CD8-positive, alpha-beta T cell (primary cell): ENCODE measurements at regions of chr19 and their contacts with region 1.

Region 1: GRCh38 chr19:7340959-7341837 is 7.5 kb upstream of the ARHGEF18 start:
- DNase-seq: peak; percentile 77 to 96 (median 84)
- ATAC-seq: peak; percentile 27
- H3K4me3 ChIP-seq: no peak overlapping the region
- H3K4me3 Mint-ChIP-seq: no peak overlapping the region
- H3K27ac ChIP-seq: no peak overlapping the region
- H3K27ac Mint-ChIP-seq: peak overlapping the region; percentile 85
- H3K4me1 ChIP-seq: peaks cover 49% of the 10 kb centered on the region
- H3K4me1 Mint-ChIP-seq: peaks cover 52% of the 10 kb centered on the region
- H3K27me3 ChIP-seq: no peaks in the 10 kb centered on the region
- H3K27me3 Mint-ChIP-seq: no peaks in the 10 kb centered on the region
- CTCF ChIP-seq: peak; percentile 93

Region 2: GRCh38 chr19:7137120-7137519 is 204.1 kb before region 1 on chr19:
- CTCF ChIA-PET with region 1: interaction called, 13 read pairs
- POLR2A ChIA-PET with region 1: no interaction called
- intact Hi-C with region 1: no loop called
- DNase-seq: no peak
- ATAC-seq: no peak
- H3K4me3 ChIP-seq: no peak overlapping the region
- H3K4me3 Mint-ChIP-seq: no peak overlapping the region
- H3K27ac ChIP-seq: no peak overlapping the region
- H3K27ac Mint-ChIP-seq: no peak overlapping the region
- H3K4me1 ChIP-seq: no peaks in the 10 kb centered on the region
- H3K4me1 Mint-ChIP-seq: no peaks in the 10 kb centered on the region
- H3K27me3 ChIP-seq: no peaks in the 10 kb centered on the region
- H3K27me3 Mint-ChIP-seq: no peaks in the 10 kb centered on the region
- CTCF ChIP-seq: no peak

Region 3: DNA sequence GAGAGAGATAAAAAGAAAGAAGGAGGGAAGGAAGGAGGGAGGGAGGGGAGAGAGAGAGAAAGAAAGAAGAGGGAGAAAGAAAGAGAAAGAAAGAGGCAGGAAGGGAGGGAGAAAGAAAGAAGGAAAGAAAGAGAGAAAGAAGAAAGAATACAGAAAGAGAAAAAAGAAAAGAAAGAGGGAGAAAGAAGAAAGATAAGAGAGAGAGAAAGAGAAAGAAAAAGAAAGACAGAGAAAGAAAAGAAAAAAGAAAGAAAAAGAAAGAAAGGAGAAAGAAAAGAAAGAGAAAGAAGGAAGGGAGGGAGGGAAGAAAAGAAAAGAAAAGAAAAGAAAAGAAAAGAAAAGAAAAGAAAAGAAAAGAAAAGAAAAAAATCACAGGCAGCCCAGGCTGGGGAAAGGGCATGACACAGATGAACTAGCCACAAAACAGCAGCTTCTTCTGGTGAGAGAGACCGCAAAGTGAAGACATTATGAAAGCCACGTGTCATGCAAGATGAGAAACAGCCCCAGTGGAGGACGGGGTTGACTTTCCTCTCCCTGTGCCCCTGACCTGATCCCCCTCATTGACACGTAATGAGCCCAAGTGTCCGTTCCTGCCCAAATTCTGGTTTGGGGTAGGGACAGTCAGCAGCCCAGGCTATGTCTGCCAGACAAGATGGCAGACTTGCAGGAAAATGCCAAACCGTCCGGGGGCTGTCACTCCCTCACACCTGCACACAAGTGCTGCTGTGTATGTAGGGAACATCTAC is 149.1 kb before region 1 on chr19:
- CTCF ChIA-PET with region 1: no interaction called
- POLR2A ChIA-PET with region 1: interaction called, 3 read pairs
- intact Hi-C with region 1: loop called in 1 of 2 experiments (anchors 2 kb)
- DNase-seq: peak; percentile 8 to 87 (median 57)
- ATAC-seq: peak; percentile 67
- H3K4me3 ChIP-seq: peak overlapping the region in 1 of 2 experiments; percentile 23
- H3K4me3 Mint-ChIP-seq: peak overlapping the region; percentile 65
- H3K27ac ChIP-seq: no peak overlapping the region
- H3K27ac Mint-ChIP-seq: peak overlapping the region; percentile 75
- H3K4me1 ChIP-seq: peaks cover 26% of the 10 kb centered on the region
- H3K4me1 Mint-ChIP-seq: peaks cover 19% of the 10 kb centered on the region
- H3K27me3 ChIP-seq: no peaks in the 10 kb centered on the region
- H3K27me3 Mint-ChIP-seq: no peaks in the 10 kb centered on the region
- CTCF ChIP-seq: no peak